Activated CD4-positive, alpha-beta memory T cell treated with anti-CD3 and anti-CD28 coated beads for 36 hours (primary cell): ENCODE measurements at regions of chr11 and their contacts with region 1.

Region 1: GRCh38 chr11:43880640-43881159 is at the start of gene ALKBH3:
- DNase-seq: peak; percentile 94
- H3K4me3 Mint-ChIP-seq: peak within 1 kb of the TSS; percentile 93
- H3K27ac Mint-ChIP-seq: peak within 1 kb of the TSS; percentile 72
- H3K4me1 Mint-ChIP-seq: peaks cover 23% of the 10 kb centered on the region
- H3K27me3 Mint-ChIP-seq: peaks cover 10% of the 10 kb centered on the region
- total RNA-seq, gene ALKBH3: 32.1 to 35.8 TPM

Region 2: DNA sequence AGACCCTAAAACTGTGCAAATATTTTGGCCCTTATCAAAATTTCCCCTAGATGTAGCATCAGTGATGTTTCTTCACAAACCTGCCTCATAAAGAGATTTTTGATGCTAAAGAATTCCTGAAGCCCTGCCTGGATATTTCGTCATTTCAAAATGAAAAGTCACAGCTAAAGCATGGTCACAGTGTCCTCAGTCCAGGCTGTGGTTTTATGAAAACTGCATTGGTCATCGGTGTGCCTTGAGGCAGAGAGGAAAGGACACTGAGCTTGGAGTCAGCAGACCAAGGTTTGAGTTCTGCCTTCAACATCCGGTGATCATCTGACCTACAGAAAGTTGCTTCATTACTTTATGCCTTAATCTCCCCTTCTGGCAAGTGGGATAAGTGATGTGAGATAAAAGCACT is 34.9 kb before region 1 on chr11:
- CTCF ChIA-PET with region 1: no interaction called
- POLR2A ChIA-PET with region 1: no interaction called
- intact Hi-C with region 1: no loop called
- DNase-seq: no peak
- H3K4me3 Mint-ChIP-seq: no peak overlapping the region
- H3K27ac Mint-ChIP-seq: no peak overlapping the region
- H3K4me1 Mint-ChIP-seq: no peaks in the 10 kb centered on the region
- H3K27me3 Mint-ChIP-seq: no peaks in the 10 kb centered on the region

Region 3: GRCh38 chr11:43920598-43921419 is 40.1 kb after region 1 on chr11:
- CTCF ChIA-PET with region 1: no interaction called
- POLR2A ChIA-PET with region 1: no interaction called
- intact Hi-C with region 1: loop called (anchors 5 kb)
- DNase-seq: peak; percentile 65
- H3K4me3 Mint-ChIP-seq: no peak overlapping the region
- H3K27ac Mint-ChIP-seq: no peak overlapping the region
- H3K4me1 Mint-ChIP-seq: peaks cover 20% of the 10 kb centered on the region
- H3K27me3 Mint-ChIP-seq: no peaks in the 10 kb centered on the region